ENCODE measurements at regions of chr9 and their contacts with region 1.

Region 1: GRCh38 chr9:88056876-88057275 is 81.4 kb downstream of the SPATA31C2 start:
- DNase-seq: no peak
- H3K4me3 ChIP-seq: no peak overlapping the region
- H3K27ac ChIP-seq: no peak overlapping the region
- H3K4me1 ChIP-seq: no peaks in the 10 kb centered on the region
- H3K27me3 ChIP-seq: no peaks in the 10 kb centered on the region
- CTCF ChIP-seq: no peak

Region 2: GRCh38 chr9:87883990-87884389 is 172.9 kb before region 1 on chr9:
- CTCF ChIA-PET with region 1: no interaction called
- POLR2A ChIA-PET with region 1: no interaction called
- intact Hi-C with region 1: no loop called
- DNase-seq: no peak
- H3K4me3 ChIP-seq: no peak overlapping the region
- H3K27ac ChIP-seq: no peak overlapping the region
- H3K4me1 ChIP-seq: no peaks in the 10 kb centered on the region
- H3K27me3 ChIP-seq: no peaks in the 10 kb centered on the region
- CTCF ChIP-seq: peak; percentile 48

Region 3: GRCh38 chr9:87950765-87951488 is 105.9 kb before region 1 on chr9:
- CTCF ChIA-PET with region 1: no interaction called
- POLR2A ChIA-PET with region 1: no interaction called
- intact Hi-C with region 1: no loop called
- DNase-seq: peak; percentile 63
- H3K4me3 ChIP-seq: no peak overlapping the region
- H3K27ac ChIP-seq: no peak overlapping the region
- H3K4me1 ChIP-seq: no peaks in the 10 kb centered on the region
- H3K27me3 ChIP-seq: no peaks in the 10 kb centered on the region
- CTCF ChIP-seq: peak; percentile 68

Region 4: DNA sequence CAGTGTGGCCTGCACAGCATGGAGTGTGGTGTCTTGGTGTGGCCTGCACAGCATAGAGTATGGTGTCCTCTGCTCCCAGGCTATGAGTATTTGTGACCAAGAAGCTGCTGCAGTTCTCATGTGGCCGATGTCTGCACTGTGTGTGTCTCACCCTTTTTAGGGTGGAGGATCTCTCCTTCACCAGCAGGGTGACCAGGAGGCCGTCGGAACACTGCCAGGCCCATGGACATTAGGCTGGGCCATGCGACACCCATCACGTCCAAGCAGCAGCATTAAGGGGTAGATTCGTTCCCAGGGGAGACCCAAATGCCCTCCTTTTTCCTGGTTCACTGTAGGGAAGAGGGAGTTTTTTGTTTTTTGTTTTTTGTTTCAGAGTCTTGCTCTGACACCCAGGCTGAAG is 216.1 kb after region 1 on chr9:
- CTCF ChIA-PET with region 1: no interaction called
- POLR2A ChIA-PET with region 1: no interaction called
- intact Hi-C with region 1: no loop called
- DNase-seq: no peak
- H3K4me3 ChIP-seq: no peak overlapping the region
- H3K27ac ChIP-seq: no peak overlapping the region
- H3K4me1 ChIP-seq: no peaks in the 10 kb centered on the region
- H3K27me3 ChIP-seq: no peaks in the 10 kb centered on the region
- CTCF ChIP-seq: no peak

Region 5: DNA sequence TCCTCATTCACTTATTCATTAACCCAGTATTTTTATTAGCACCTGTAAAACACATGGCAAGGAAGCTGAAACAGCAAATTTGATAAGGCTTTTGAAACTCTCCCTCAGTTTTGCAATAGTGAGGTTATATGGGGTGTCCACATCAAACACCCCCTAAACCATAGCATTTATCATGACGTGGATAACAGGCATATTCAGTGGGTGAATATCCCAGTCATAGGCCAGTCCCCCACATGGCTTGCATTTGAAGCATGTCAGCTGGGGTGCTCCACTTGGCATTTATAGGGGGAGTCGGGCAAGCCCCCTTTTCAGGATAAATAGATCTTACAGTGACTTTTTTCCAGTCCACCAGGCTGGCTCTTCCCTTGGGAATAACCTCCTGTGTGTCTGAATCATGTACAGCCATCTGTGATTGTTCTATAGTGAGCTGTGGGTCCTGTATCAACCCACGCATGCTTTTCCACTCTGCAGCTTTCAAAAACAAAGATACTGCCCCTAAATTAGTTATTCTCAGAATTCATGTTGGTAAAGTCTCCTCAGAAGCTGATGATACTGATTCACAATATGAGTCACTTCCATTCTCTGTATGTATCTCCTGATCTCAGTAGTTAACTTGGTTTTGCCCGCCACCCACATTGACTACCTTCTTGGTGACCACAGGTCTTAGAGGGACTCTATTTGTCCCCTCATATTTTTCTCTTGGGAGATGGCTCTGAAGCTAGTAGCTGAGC is 247.0 kb after region 1 on chr9:
- CTCF ChIA-PET with region 1: no interaction called
- POLR2A ChIA-PET with region 1: no interaction called
- intact Hi-C with region 1: no loop called
- DNase-seq: peak; percentile 15
- H3K4me3 ChIP-seq: no peak overlapping the region
- H3K27ac ChIP-seq: no peak overlapping the region
- H3K4me1 ChIP-seq: no peaks in the 10 kb centered on the region
- H3K27me3 ChIP-seq: no peaks in the 10 kb centered on the region
- CTCF ChIP-seq: no peak

Region 6: DNA sequence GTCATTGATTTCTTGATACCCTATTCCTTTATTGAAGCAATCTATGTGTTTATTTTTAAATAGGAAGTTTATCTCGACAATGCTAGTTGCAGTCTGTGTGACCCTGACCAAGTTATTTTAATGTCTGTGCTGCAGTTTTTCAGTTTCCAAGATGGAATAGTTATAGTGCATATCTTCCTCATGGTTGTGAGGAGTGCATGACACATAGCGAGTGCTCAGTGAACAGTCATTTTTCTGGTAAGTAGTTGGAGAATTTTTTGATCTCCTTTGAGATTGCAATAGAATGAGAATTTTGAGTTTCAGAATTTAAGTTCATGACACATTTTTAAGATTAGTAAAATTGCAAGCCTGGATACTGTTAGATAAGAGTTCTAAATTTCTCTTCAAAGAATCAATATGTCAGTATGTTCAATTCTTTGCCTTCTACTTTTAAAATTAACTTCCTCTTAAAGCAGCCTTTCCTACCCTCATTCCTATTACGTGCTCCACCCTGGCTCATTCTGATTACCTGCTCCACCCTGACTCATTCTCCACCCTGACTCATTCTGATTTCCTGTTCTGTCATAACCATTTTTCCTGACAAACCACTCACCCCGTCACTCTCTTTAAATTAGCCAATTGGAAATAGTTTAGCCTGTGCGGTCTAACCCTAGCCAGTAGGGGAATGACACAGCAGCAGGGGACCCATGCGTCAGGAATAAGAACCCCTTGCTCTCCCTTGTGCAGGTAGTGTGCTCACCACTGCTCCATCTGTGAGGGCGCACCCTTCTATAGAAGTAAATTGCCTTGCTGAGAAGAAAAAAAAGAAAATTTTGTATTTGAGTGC is 362.1 kb after region 1 on chr9:
- CTCF ChIA-PET with region 1: no interaction called
- POLR2A ChIA-PET with region 1: interaction called, 14 read pairs
- intact Hi-C with region 1: no loop called
- DNase-seq: peak; percentile 25
- H3K4me3 ChIP-seq: no peak overlapping the region
- H3K27ac ChIP-seq: no peak overlapping the region
- H3K4me1 ChIP-seq: peaks cover 14% of the 10 kb centered on the region
- H3K27me3 ChIP-seq: no peaks in the 10 kb centered on the region
- CTCF ChIP-seq: no peak